Activated B cell treated with CpG ODN at 0.5 μM for 24 hours (primary cell): ENCODE measurements at regions of chr7 and their contacts with region 1.

Region 1: GRCh38 chr7:106285051-106285854 is 470 bp upstream of the NAMPT start:
- DNase-seq: peak; percentile 96
- ATAC-seq: peak; percentile 85
- H3K4me3 Mint-ChIP-seq: peak overlapping the region; percentile 89
- H3K27ac Mint-ChIP-seq: peak overlapping the region; percentile 98
- H3K4me1 Mint-ChIP-seq: peaks cover 31% of the 10 kb centered on the region
- H3K27me3 Mint-ChIP-seq: no peaks in the 10 kb centered on the region
- CTCF ChIP-seq: no peak

Region 2: GRCh38 chr7:105013221-105013815 is 1271.9 kb before region 1 on chr7:
- CTCF ChIA-PET with region 1: no interaction called
- POLR2A ChIA-PET with region 1: interaction called, 5 read pairs
- intact Hi-C with region 1: loop called (anchors 5 kb)
- DNase-seq: peak; percentile 91
- ATAC-seq: peak; percentile 57
- H3K4me3 Mint-ChIP-seq: peak overlapping the region; percentile 96
- H3K27ac Mint-ChIP-seq: peak overlapping the region; percentile 100
- H3K4me1 Mint-ChIP-seq: peaks cover 53% of the 10 kb centered on the region
- H3K27me3 Mint-ChIP-seq: no peaks in the 10 kb centered on the region
- CTCF ChIP-seq: no peak

Region 3: GRCh38 chr7:105808703-105809590 is 476.3 kb before region 1 on chr7:
- CTCF ChIA-PET with region 1: no interaction called
- POLR2A ChIA-PET with region 1: interaction called, 5 read pairs
- intact Hi-C with region 1: loop called (anchors 2 kb)
- DNase-seq: peak; percentile 60
- ATAC-seq: peak; percentile 95
- H3K4me3 Mint-ChIP-seq: peak overlapping the region; percentile 66
- H3K27ac Mint-ChIP-seq: peak overlapping the region; percentile 87
- H3K4me1 Mint-ChIP-seq: peaks cover 46% of the 10 kb centered on the region
- H3K27me3 Mint-ChIP-seq: no peaks in the 10 kb centered on the region
- CTCF ChIP-seq: no peak

Region 4: GRCh38 chr7:106080300-106080987 is 204.8 kb before region 1 on chr7:
- CTCF ChIA-PET with region 1: no interaction called
- POLR2A ChIA-PET with region 1: no interaction called
- intact Hi-C with region 1: no loop called
- DNase-seq: no peak
- ATAC-seq: no peak
- H3K4me3 Mint-ChIP-seq: no peak overlapping the region
- H3K27ac Mint-ChIP-seq: peak overlapping the region; percentile 69
- H3K4me1 Mint-ChIP-seq: peaks cover 89% of the 10 kb centered on the region
- H3K27me3 Mint-ChIP-seq: no peaks in the 10 kb centered on the region
- CTCF ChIP-seq: no peak

Region 5: GRCh38 chr7:106176414-106177299 is 108.6 kb before region 1 on chr7:
- CTCF ChIA-PET with region 1: interaction called, 5 read pairs
- POLR2A ChIA-PET with region 1: no interaction called
- intact Hi-C with region 1: loop called (anchors 5 kb)
- DNase-seq: peak; percentile 64
- ATAC-seq: peak; percentile 91
- H3K4me3 Mint-ChIP-seq: no peak overlapping the region
- H3K27ac Mint-ChIP-seq: no peak overlapping the region
- H3K4me1 Mint-ChIP-seq: peaks cover 11% of the 10 kb centered on the region
- H3K27me3 Mint-ChIP-seq: peaks cover 4% of the 10 kb centered on the region
- CTCF ChIP-seq: peak; percentile 41

Region 6: DNA sequence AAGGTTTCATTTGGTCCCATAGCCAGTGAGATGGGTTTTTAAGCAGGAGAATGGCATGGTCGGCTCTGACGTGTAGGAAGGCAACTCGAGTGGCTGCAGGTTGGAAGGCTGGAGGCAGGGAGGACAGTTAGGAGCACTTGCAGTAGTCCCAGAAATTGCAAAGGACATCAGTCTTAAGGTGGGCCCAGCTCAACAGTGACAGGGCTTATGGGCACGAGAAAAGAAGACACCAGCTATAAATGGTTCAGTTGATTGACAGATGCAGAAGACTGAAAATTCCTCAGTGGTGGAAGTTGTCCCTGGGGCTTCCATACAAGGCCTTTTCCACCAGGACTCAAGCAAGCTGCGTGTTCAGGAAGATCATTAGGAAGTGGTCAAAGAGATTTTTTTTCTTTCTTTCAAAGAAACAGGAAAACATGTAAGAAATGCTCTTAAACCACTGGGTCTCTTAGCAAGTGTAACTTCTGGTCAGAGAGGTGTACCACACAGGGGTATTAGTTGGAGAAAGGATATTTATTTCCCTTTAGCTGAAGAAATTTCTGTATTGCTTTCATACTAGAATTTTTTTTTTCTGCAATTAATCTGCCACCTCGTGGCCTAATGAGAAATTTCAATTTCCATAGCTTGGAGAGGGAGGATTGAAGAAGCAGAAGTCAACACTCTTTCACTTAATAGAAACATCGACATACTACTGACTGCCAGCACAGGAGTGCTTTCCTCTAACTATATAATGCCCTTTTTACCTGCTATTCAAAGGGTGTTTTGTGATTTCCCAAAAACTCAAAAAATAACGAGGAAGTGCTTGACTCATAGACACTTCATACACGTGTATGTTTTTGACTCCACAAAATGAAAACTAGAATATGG is 177.0 kb after region 1 on chr7:
- CTCF ChIA-PET with region 1: interaction called, 5 read pairs
- POLR2A ChIA-PET with region 1: interaction called, 13 read pairs
- intact Hi-C with region 1: loop called (anchors 1 kb)
- DNase-seq: no peak
- ATAC-seq: peak; percentile 62
- H3K4me3 Mint-ChIP-seq: no peak overlapping the region
- H3K27ac Mint-ChIP-seq: no peak overlapping the region
- H3K4me1 Mint-ChIP-seq: peaks cover 14% of the 10 kb centered on the region
- H3K27me3 Mint-ChIP-seq: no peaks in the 10 kb centered on the region
- CTCF ChIP-seq: no peak

Region 7: GRCh38 chr7:106659963-106660861 is 375.0 kb after region 1 on chr7:
- CTCF ChIA-PET with region 1: interaction called, 3 read pairs
- POLR2A ChIA-PET with region 1: interaction called, 7 read pairs
- intact Hi-C with region 1: loop called (anchors 1 kb)
- DNase-seq: peak; percentile 79
- ATAC-seq: peak; percentile 52
- H3K4me3 Mint-ChIP-seq: peak overlapping the region; percentile 94
- H3K27ac Mint-ChIP-seq: peak overlapping the region; percentile 90
- H3K4me1 Mint-ChIP-seq: peaks cover 34% of the 10 kb centered on the region
- H3K27me3 Mint-ChIP-seq: no peaks in the 10 kb centered on the region
- CTCF ChIP-seq: peak; percentile 84

Region 8: DNA sequence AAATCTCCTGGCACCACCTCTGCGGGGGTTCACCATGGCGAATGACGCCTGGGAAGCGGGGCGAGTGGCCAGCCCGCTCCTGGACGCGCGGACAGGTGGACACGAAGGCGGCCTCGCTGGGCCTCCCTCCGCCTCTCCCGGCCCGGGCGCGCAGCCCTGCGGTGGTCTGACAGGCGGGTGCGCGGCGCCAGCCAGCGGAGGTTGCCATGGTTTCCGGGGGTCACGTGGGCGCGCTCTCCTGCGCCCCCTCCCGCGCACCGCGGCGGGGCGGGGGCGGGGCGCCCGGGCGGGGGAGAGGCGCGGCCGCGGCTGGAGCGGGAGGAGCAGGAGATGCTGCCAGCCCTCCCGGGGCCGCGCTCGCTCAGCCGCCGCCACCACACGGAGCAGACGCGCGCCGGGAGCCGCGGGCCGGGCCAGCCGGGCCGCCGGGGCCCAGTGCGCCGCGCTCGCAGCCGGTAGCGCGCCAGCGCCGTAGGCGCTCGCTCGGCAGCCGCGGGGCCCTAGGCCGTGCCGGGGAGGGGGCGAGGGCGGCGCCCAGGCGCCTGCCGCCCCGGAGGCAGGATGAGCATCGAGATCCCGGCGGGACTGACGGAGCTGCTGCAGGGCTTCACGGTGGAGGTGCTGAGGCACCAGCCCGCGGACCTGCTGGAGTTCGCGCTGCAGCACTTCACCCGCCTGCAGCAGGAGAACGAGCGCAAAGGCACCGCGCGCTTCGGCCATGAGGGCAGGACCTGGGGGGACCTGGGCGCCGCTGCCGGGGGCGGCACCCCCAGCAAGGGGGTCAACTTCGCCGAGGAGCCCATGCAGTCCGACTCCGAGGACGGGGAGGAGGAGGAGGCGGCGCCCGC is 759.3 kb after region 1 on chr7 and contains the start of gene PRKAR2B:
- CTCF ChIA-PET with region 1: no interaction called
- POLR2A ChIA-PET with region 1: no interaction called
- intact Hi-C with region 1: loop called (anchors 10 kb)
- DNase-seq: peak; percentile 70
- ATAC-seq: peak; percentile 90
- H3K4me3 Mint-ChIP-seq: peak within 1 kb of the TSS; percentile 86
- H3K27ac Mint-ChIP-seq: no peak within 1 kb of the TSS
- H3K4me1 Mint-ChIP-seq: peaks cover 9% of the 10 kb centered on the region
- H3K27me3 Mint-ChIP-seq: peaks cover 26% of the 10 kb centered on the region
- CTCF ChIP-seq: no peak
- total RNA-seq, gene PRKAR2B: 0.64 and 0.71 TPM in 2 replicates